Activated CD4-positive, alpha-beta memory T cell treated with anti-CD3 and anti-CD28 coated beads, Interleukin-2, amount 10 ng/mL, durations not matched to agents 7 days and 5 days (primary cell): ENCODE measurements at regions of chr3 and their contacts with region 1.

Region 1: DNA sequence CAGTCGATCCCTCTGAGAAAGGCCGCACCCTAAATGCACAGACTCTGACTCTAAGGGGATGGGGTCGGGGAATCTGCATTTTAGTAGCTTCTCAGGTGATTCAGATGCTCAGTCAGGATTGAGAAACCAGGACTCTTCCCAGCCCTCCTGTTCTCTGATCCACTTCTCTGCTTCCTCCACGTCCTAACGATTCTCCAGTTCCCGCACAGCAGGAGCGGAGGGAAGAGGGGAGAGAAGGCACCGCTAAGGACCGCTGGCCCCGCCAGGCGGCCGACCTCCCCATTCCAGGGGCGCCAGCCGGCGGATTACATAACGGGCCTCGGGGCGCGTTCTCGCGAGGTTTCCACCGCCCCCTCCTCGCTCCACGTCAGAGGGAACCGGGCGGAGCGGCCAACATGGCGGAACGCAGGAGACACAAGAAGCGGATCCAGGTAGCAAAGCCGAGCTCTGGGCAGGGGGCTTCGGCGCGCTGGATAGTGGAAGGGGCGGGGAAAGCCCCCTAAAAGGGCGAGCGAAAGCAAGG is at the start of gene SEC62:
- DNase-seq: peak; percentile 92
- H3K4me3 Mint-ChIP-seq: peak within 1 kb of the TSS; percentile 85
- H3K27ac Mint-ChIP-seq: peak within 1 kb of the TSS; percentile 92
- H3K4me1 Mint-ChIP-seq: peaks cover 40% of the 10 kb centered on the region
- H3K27me3 Mint-ChIP-seq: no peaks in the 10 kb centered on the region
- total RNA-seq, gene SEC62: 53.7 to 57.9 TPM

Region 2: DNA sequence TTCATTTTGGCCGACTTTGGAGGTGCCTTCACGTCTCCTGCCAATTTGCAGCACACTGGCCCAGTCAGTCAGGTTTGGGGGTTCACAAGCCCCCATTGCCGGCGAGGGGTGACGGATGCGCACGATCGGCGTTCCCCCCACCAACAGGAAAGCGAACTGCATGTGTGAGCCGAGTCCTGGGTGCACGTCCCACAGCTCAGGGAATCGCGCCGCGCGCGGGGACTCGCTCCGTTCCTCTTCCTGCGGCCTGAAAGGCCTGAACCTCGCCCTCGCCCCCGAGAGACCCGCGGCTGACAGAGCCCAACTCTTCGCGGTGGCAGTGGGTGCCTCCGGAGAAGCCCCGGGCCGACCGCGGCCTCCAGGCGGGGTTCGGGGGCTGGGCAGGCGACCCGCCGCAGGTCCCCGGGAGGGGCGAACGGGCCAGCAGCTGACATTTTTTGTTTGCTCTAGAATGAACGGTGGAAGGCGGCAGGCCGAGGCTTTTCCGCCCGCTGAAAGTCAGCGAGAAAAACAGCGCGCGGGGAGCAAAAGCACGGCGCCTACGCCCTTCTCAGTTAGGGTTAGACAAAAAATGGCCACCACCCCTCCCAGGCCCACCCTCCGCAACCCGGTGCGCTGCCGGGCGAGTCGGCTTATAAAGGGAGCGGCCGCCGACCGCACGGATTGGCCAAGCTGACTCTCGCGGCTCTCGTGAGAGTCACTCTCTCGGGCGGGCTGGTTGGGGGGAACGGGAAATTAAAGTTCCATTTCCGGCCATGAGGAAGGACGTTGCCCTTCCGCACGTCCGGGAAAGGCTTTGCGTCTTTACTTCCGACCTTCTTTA is 201.8 kb before region 1 on chr3 and contains the start of gene TERC:
- CTCF ChIA-PET with region 1: interaction called, 4 read pairs
- POLR2A ChIA-PET with region 1: interaction called, 22 read pairs
- DNase-seq: peak; percentile 92
- H3K4me3 Mint-ChIP-seq: peak within 1 kb of the TSS; percentile 96
- H3K27ac Mint-ChIP-seq: peak within 1 kb of the TSS; percentile 97
- H3K4me1 Mint-ChIP-seq: peaks cover 43% of the 10 kb centered on the region
- H3K27me3 Mint-ChIP-seq: no peaks in the 10 kb centered on the region
- total RNA-seq, gene TERC: 1.9 to 4.0 TPM

Region 3: GRCh38 chr3:169863458-169863899 is 103.0 kb before region 1 on chr3:
- CTCF ChIA-PET with region 1: interaction called, 16 read pairs
- POLR2A ChIA-PET with region 1: no interaction called
- DNase-seq: peak; percentile 72
- H3K4me3 Mint-ChIP-seq: no peak overlapping the region
- H3K27ac Mint-ChIP-seq: no peak overlapping the region
- H3K4me1 Mint-ChIP-seq: peaks cover 21% of the 10 kb centered on the region
- H3K27me3 Mint-ChIP-seq: peaks cover 16% of the 10 kb centered on the region

Region 4: DNA sequence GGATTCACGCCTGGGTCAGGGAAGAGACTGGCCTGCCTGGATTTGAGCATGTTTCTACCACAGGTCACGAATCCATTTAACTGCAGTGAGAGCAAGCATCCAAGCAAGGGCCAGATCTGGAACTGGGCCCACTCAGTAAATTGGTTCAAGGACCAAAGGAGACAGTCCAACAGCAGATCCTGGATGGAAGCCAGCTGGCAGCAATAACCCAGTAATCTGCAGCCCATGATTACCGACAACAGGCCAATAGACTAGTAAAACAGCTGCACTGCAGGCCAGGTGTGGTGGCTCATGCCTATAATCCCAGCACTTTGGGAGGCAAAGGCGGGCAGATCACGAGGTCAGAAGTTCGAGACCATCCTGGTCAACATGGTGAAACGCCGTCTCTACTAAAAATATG is 43.3 kb before region 1 on chr3:
- CTCF ChIA-PET with region 1: no interaction called
- POLR2A ChIA-PET with region 1: no interaction called
- DNase-seq: no peak
- H3K4me3 Mint-ChIP-seq: no peak overlapping the region
- H3K27ac Mint-ChIP-seq: no peak overlapping the region
- H3K4me1 Mint-ChIP-seq: no peaks in the 10 kb centered on the region
- H3K27me3 Mint-ChIP-seq: peaks cover 6% of the 10 kb centered on the region

Region 5: DNA sequence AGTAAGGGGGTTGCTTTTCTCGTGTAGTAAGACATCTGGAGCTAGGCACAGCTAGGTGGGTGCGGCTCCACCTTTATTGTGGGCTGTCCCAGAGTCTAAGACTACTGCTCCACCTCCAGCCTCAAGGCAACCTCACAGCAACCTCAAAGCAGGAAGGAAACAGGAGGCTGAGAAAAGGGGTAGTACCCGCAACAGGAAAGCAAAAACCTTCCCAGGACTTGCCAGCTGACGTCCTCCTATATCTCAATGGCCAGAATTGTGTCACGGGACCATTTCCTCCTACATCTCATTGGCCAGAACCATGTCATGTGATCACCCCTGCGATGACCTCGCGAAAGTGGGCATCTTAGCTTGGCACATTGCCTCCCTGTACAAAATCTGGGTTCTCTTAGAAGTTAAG is 67.0 kb after region 1 on chr3:
- CTCF ChIA-PET with region 1: interaction called, 3 read pairs
- POLR2A ChIA-PET with region 1: interaction called, 11 read pairs
- DNase-seq: peak; percentile 71
- H3K4me3 Mint-ChIP-seq: no peak overlapping the region
- H3K27ac Mint-ChIP-seq: peak overlapping the region; percentile 49
- H3K4me1 Mint-ChIP-seq: peaks cover 34% of the 10 kb centered on the region
- H3K27me3 Mint-ChIP-seq: no peaks in the 10 kb centered on the region

Region 6: DNA sequence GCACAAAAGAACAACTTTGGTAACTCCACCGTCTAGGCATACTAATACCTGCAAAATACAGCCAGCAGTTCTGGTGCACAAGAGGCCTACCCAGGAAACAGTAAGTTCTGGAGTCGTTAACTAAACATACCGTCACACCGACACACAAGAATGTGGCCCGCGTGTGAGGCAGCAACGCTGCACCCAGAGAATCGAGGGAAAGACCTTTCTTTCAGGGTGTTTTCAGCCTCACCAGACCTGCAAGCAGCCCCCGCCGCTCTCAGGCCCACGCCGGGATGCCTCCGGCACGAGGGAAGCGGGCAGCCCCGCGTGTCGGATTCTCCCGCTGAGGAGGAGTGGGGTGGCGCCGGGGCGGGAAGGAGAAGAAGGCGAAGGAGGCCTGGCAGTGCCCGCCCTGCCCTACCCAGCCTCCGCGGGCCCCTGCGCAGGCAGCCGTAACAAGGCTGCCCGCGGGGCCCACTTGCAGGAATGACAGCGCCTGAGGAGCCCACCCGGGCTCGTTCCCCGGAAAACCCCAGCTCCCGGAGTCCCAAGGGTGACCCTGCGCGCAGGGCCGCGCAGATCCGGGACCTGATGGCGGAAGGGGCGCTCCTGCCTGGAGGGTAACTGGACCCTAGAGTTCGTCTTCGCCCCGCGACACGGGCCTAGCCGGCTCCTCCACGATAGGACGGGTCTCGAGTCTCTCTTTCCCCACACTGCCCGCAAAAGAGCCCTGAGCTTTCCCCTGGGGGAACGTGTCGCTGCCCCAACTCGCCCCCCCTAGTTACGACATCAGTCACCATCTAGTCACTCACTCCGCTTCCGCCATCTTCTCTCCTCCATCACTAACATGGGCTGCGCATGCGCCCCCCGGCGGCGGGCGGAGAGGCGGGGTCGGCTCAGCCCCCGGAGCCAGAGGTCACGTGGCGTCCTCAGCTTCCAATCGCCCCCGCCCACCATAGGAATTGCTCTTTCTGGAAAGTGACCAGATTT is 214.7 kb after region 1 on chr3 and contains the start of gene PHC3:
- CTCF ChIA-PET with region 1: interaction called, 3 read pairs
- POLR2A ChIA-PET with region 1: interaction called, 11 read pairs
- DNase-seq: peak; percentile 92
- H3K4me3 Mint-ChIP-seq: peak within 1 kb of the TSS; percentile 99
- H3K27ac Mint-ChIP-seq: peak within 1 kb of the TSS; percentile 98
- H3K4me1 Mint-ChIP-seq: peaks cover 27% of the 10 kb centered on the region
- H3K27me3 Mint-ChIP-seq: no peaks in the 10 kb centered on the region
- total RNA-seq, gene PHC3: 74.5 TPM